Activated naive CD4-positive, alpha-beta T cell treated with anti-CD3 and anti-CD28 coated beads for 36 hours (primary cell): ENCODE measurements at regions of chr15 and their contacts with region 1.

Region 1: GRCh38 chr15:39782441-39783138 is at the start of gene FSIP1:
- DNase-seq: peak; percentile 98
- H3K4me3 Mint-ChIP-seq: peak within 1 kb of the TSS; percentile 77
- H3K27ac Mint-ChIP-seq: peak within 1 kb of the TSS; percentile 64
- H3K4me1 Mint-ChIP-seq: peaks cover 43% of the 10 kb centered on the region
- H3K27me3 Mint-ChIP-seq: no peaks in the 10 kb centered on the region
- total RNA-seq, gene FSIP1: 0.21 to 0.27 TPM

Region 2: GRCh38 chr15:38072348-38073177 is 1710.0 kb before region 1 on chr15:
- CTCF ChIA-PET with region 1: no interaction called
- intact Hi-C with region 1: loop called (anchors 10 kb)
- DNase-seq: peak; percentile 47
- H3K4me3 Mint-ChIP-seq: peak overlapping the region; percentile 44
- H3K27ac Mint-ChIP-seq: no peak overlapping the region
- H3K4me1 Mint-ChIP-seq: peaks cover 34% of the 10 kb centered on the region
- H3K27me3 Mint-ChIP-seq: peaks cover 65% of the 10 kb centered on the region

Region 3: GRCh38 chr15:39874890-39875549 is 92.4 kb after region 1 on chr15:
- CTCF ChIA-PET with region 1: interaction called, 17 read pairs
- intact Hi-C with region 1: loop called (anchors 1 kb)
- DNase-seq: peak; percentile 54
- H3K4me3 Mint-ChIP-seq: no peak overlapping the region
- H3K27ac Mint-ChIP-seq: no peak overlapping the region
- H3K4me1 Mint-ChIP-seq: peaks cover 4% of the 10 kb centered on the region
- H3K27me3 Mint-ChIP-seq: peaks cover 2% of the 10 kb centered on the region

Region 4: GRCh38 chr15:39976291-39977274 is 194.0 kb after region 1 on chr15:
- CTCF ChIA-PET with region 1: no interaction called
- intact Hi-C with region 1: loop called (anchors 2 kb)
- DNase-seq: peak; percentile 11
- H3K4me3 Mint-ChIP-seq: peak overlapping the region; percentile 36
- H3K27ac Mint-ChIP-seq: no peak overlapping the region
- H3K4me1 Mint-ChIP-seq: no peaks in the 10 kb centered on the region
- H3K27me3 Mint-ChIP-seq: no peaks in the 10 kb centered on the region

Region 5: GRCh38 chr15:40108855-40109735 is 326.5 kb after region 1 on chr15 and contains the start of gene BMF:
- CTCF ChIA-PET with region 1: no interaction called
- intact Hi-C with region 1: loop called (anchors 2 kb)
- DNase-seq: peak; percentile 98
- H3K4me3 Mint-ChIP-seq: peak within 1 kb of the TSS; percentile 84
- H3K27ac Mint-ChIP-seq: peak within 1 kb of the TSS; percentile 31
- H3K4me1 Mint-ChIP-seq: peaks cover 40% of the 10 kb centered on the region
- H3K27me3 Mint-ChIP-seq: no peaks in the 10 kb centered on the region
- total RNA-seq, gene BMF: 9.4 to 10.3 TPM

Region 6: GRCh38 chr15:40323239-40323952 is 540.8 kb after region 1 on chr15 and contains the start of gene INAFM2:
- CTCF ChIA-PET with region 1: no interaction called
- intact Hi-C with region 1: loop called (anchors 1 kb)
- DNase-seq: peak; percentile 77
- H3K4me3 Mint-ChIP-seq: peak within 1 kb of the TSS; percentile 73
- H3K27ac Mint-ChIP-seq: no peak within 1 kb of the TSS
- H3K4me1 Mint-ChIP-seq: peaks cover 22% of the 10 kb centered on the region
- H3K27me3 Mint-ChIP-seq: no peaks in the 10 kb centered on the region
- total RNA-seq, gene INAFM2: 4.9 to 6.5 TPM